ENCODE measurements at regions of chr1 and their contacts with region 1.

Region 1: DNA sequence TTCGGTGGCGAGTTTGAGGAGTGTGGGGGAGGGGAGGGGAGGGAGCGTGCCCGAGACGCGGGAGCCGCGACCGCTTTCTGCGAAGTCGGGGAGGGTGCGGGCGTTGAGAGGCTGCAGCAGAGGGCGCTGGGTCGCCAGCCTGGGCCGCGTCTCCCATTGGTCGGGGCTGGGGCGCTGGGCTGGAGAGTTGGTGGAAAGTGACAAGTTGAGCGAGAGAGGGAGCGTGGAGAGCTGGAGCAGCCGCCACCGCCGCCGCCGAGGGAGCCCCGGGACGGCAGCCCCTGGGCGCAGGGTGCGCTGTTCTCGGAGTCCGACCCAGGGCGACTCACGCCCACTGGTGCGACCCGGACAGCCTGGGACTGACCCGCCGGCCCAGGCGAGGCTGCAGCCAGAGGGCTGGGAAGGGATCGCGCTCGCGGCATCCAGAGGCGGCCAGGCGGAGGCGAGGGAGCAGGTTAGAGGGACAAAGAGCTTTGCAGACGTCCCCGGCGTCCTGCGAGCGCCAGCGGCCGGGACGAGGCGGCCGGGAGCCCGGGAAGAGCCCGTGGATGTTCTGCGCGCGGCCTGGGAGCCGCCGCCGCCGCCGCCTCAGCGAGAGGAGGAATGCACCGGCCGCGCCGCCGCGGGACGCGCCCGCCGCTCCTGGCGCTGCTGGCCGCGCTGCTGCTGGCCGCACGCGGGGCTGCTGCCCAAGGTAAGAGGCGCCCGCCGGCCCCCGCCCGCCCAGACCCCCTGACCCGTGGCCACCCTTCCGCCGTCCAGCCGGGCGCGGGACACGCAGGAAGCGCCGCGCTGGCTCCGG is at the start of gene ROR1:
- DNase-seq: peak; percentile 82
- H3K4me3 ChIP-seq: peak within 1 kb of the TSS; percentile 54 to 55
- H3K27ac ChIP-seq: peak within 1 kb of the TSS; percentile 77 to 80
- H3K4me1 ChIP-seq: no peaks in the 10 kb centered on the region
- H3K27me3 ChIP-seq: no peaks in the 10 kb centered on the region
- CTCF ChIP-seq: peak; percentile 43 to 70 (median 58)
- POLR2A ChIP-seq: peak; percentile 38
- total RNA-seq, gene ROR1: 7.3 to 11.1 TPM

Region 2: GRCh38 chr1:63698001-63698838 is 75.8 kb before region 1 on chr1:
- intact Hi-C with region 1: loop called (anchors 2 kb)
- DNase-seq: no peak
- H3K4me3 ChIP-seq: no peak overlapping the region
- H3K27ac ChIP-seq: peak overlapping the region; percentile 58 to 63
- H3K4me1 ChIP-seq: no peaks in the 10 kb centered on the region
- H3K27me3 ChIP-seq: no peaks in the 10 kb centered on the region
- CTCF ChIP-seq: no peak
- POLR2A ChIP-seq: no peak

Region 3: DNA sequence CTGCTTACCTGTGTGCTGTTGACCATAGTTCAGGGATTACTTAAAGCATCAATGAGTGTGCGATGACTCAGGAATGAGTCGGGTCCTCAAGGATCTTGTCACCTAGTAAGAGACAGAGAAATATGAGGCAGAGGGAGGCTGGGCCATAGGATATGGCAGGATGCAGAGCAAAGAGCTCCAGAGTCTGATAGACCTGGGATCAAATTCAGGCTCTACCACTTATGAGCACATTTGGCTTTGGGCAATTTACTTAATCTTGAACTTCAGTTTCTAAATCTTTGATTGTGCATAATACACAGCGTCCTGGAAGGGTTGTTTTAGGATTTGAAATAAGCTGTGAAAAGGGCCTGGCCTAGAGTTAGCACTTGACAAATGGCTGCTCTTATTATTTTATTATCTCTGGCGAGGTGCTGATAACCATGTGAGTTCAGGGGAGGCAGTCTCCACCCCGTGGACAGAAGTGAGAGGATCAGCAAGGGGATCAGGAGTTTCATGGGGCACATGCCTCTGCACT is 94.3 kb after region 1 on chr1:
- intact Hi-C with region 1: loop called (anchors 5 kb)
- DNase-seq: no peak
- H3K4me3 ChIP-seq: no peak overlapping the region
- H3K27ac ChIP-seq: peak overlapping the region in 1 of 2 donors; percentile 2
- H3K4me1 ChIP-seq: no peaks in the 10 kb centered on the region
- H3K27me3 ChIP-seq: no peaks in the 10 kb centered on the region
- CTCF ChIP-seq: no peak
- POLR2A ChIP-seq: no peak

Region 4: GRCh38 chr1:63917571-63918417 is 143.8 kb after region 1 on chr1:
- intact Hi-C with region 1: loop called (anchors 2 kb)
- DNase-seq: no peak
- H3K4me3 ChIP-seq: no peak overlapping the region
- H3K27ac ChIP-seq: no peak overlapping the region
- H3K4me1 ChIP-seq: peaks cover 3% of the 10 kb centered on the region
- H3K27me3 ChIP-seq: no peaks in the 10 kb centered on the region
- CTCF ChIP-seq: peak in 1 of 4 experiments; percentile 6
- POLR2A ChIP-seq: no peak

Region 5: DNA sequence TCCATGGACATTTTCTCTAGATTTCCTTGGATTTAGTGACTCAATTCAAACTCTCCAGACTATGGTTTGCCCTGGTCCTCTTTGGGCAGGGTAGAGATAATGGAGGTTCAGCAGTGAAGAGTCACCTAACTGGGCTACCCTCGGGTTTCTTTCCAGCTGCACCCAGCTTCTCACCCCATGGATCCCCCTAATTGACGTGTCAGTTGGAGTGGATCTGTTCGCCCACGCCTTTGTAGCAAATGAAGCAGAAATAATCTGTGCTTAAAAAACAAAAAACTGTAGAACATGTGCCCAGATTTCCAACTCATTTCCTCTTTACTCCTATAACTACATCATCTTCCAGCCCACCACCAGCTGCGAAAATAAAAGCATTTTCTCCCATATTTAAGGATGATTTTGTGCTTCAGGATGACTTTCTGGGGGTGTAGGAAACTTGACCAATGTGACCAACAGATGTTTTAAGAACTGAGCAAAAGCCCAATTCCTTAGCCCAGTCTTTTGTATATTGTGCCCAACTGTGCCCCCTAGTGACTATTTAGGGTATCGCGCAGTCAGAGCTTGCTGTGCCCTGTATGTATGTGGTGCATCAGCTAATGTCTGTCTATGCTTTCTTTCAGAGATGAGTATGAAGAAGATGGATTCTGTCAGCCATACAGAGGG is 362.9 kb after region 1 on chr1:
- intact Hi-C with region 1: loop called (anchors 2 kb)
- DNase-seq: peak; percentile 75
- H3K4me3 ChIP-seq: no peak overlapping the region
- H3K27ac ChIP-seq: no peak overlapping the region
- H3K4me1 ChIP-seq: no peaks in the 10 kb centered on the region
- H3K27me3 ChIP-seq: no peaks in the 10 kb centered on the region
- CTCF ChIP-seq: peak; percentile 73 to 89 (median 86)
- POLR2A ChIP-seq: no peak

Region 6: GRCh38 chr1:64163970-64164369 is 390.0 kb after region 1 on chr1:
- intact Hi-C with region 1: loop called (anchors 10 kb)
- DNase-seq: no peak
- H3K4me3 ChIP-seq: no peak overlapping the region
- H3K27ac ChIP-seq: no peak overlapping the region
- H3K4me1 ChIP-seq: no peaks in the 10 kb centered on the region
- H3K27me3 ChIP-seq: no peaks in the 10 kb centered on the region
- CTCF ChIP-seq: peak in 2 of 4 experiments; percentile 25 to 34
- POLR2A ChIP-seq: no peak

Region 7: DNA sequence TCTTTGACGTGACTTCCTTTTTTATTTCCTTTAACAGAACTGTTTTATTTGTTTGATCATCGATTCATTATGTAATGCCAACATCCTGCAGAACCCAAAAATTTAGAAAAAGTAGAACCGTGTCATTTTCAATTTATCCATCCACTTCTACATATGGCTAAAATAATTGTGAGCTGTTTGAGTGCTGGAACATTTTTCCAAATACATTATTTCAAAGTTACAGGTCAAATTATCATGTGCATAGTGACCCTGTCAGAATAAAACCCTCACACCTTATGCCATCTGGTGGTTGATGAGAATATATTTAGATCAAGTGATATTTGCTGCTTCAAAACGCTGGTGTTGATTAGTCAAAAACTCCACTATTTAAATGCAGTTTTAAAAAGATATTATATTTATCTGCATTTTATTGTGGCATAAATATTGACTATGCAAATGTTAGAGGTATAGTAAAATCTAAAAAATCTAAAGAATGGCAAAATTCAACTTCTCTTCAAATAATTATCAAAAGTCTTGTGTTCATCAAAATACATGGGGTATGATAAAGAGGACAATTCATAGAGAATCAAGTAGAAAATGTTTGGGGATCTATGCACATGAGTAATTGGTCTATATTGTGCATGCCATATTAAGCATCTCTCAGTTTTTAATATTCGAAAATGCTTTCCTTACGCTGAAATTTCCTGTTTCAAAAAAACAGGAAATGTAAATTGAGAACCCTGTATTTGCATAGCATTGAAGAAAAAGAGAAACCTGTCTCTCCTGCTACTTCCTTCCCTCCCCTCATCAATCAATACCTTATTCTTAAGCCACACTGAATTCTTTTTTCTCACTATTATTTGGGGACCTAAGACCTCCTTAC is 469.1 kb after region 1 on chr1:
- intact Hi-C with region 1: loop called (anchors 2 kb)
- DNase-seq: no peak
- H3K4me3 ChIP-seq: no peak overlapping the region
- H3K27ac ChIP-seq: no peak overlapping the region
- H3K4me1 ChIP-seq: no peaks in the 10 kb centered on the region
- H3K27me3 ChIP-seq: no peaks in the 10 kb centered on the region
- CTCF ChIP-seq: peak; percentile 12 to 73 (median 64)
- POLR2A ChIP-seq: no peak

Measured in prostate gland (tissue), 2 donors.